Natural killer cell (primary cell): ENCODE measurements at regions of chr18 and their contacts with region 1.

Region 1: GRCh38 chr18:22933206-22933957 is at the start of gene RBBP8:
- DNase-seq: peak; percentile 85 to 89
- ATAC-seq: peak; percentile 83 to 91 (median 85)
- H3K4me3 ChIP-seq: peak within 1 kb of the TSS; percentile 99
- H3K4me3 Mint-ChIP-seq: peak within 1 kb of the TSS; percentile 96
- H3K27ac ChIP-seq: peak within 1 kb of the TSS; percentile 99
- H3K27ac Mint-ChIP-seq: peak within 1 kb of the TSS; percentile 94 to 95
- H3K4me1 ChIP-seq: peaks cover 8% of the 10 kb centered on the region
- H3K4me1 Mint-ChIP-seq: peaks cover 14 to 15% of the 10 kb centered on the region in 2 donors
- H3K27me3 ChIP-seq: no peaks in the 10 kb centered on the region
- H3K27me3 Mint-ChIP-seq: no peaks in the 10 kb centered on the region
- CTCF ChIP-seq: no peak
- total RNA-seq, gene RBBP8: 11.6 to 18.7 (median 12.1) TPM

Region 2: DNA sequence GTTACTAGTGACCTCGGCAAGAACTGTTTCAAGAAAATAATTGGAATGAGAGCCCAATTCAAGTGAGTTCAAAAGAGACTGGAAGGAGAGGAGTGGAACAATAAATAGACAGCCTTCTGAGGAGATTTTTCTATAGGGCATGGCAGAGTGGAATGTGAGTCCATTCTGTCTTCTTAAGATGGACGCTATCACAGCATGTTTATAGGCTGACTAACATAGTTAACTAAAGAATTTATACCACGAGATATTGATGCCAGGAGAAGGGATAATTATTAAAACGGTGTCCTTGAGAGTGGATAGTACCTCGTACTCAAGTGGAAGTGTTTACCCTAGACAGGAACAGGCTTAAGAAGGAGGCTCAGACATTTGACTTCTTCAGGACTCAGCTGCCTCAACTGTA is 143.8 kb before region 1 on chr18:
- intact Hi-C with region 1: no loop called
- DNase-seq: no peak
- ATAC-seq: no peak
- H3K4me3 ChIP-seq: no peak overlapping the region
- H3K4me3 Mint-ChIP-seq: no peak overlapping the region
- H3K27ac ChIP-seq: no peak overlapping the region
- H3K27ac Mint-ChIP-seq: no peak overlapping the region
- H3K4me1 ChIP-seq: no peaks in the 10 kb centered on the region
- H3K4me1 Mint-ChIP-seq: no peaks in the 10 kb centered on the region
- H3K27me3 ChIP-seq: no peaks in the 10 kb centered on the region
- H3K27me3 Mint-ChIP-seq: peaks cover 21 to 39% of the 10 kb centered on the region in 2 donors
- CTCF ChIP-seq: no peak

Region 3: GRCh38 chr18:22900558-22901238 is 32.7 kb before region 1 on chr18:
- intact Hi-C with region 1: no loop called
- DNase-seq: no peak
- ATAC-seq: no peak
- H3K4me3 ChIP-seq: no peak overlapping the region
- H3K4me3 Mint-ChIP-seq: no peak overlapping the region
- H3K27ac ChIP-seq: no peak overlapping the region
- H3K27ac Mint-ChIP-seq: no peak overlapping the region
- H3K4me1 ChIP-seq: no peaks in the 10 kb centered on the region
- H3K4me1 Mint-ChIP-seq: no peaks in the 10 kb centered on the region
- H3K27me3 ChIP-seq: no peaks in the 10 kb centered on the region
- H3K27me3 Mint-ChIP-seq: peaks cover 0 to 6% of the 10 kb centered on the region in 2 donors
- CTCF ChIP-seq: no peak

Region 4: GRCh38 chr18:22971038-22971437 is 37.7 kb after region 1 on chr18:
- intact Hi-C with region 1: no loop called
- DNase-seq: no peak
- ATAC-seq: no peak
- H3K4me3 ChIP-seq: no peak overlapping the region
- H3K4me3 Mint-ChIP-seq: no peak overlapping the region
- H3K27ac ChIP-seq: no peak overlapping the region
- H3K27ac Mint-ChIP-seq: no peak overlapping the region
- H3K4me1 ChIP-seq: no peaks in the 10 kb centered on the region
- H3K4me1 Mint-ChIP-seq: no peaks in the 10 kb centered on the region
- H3K27me3 ChIP-seq: no peaks in the 10 kb centered on the region
- H3K27me3 Mint-ChIP-seq: no peaks in the 10 kb centered on the region
- CTCF ChIP-seq: no peak

Region 5: DNA sequence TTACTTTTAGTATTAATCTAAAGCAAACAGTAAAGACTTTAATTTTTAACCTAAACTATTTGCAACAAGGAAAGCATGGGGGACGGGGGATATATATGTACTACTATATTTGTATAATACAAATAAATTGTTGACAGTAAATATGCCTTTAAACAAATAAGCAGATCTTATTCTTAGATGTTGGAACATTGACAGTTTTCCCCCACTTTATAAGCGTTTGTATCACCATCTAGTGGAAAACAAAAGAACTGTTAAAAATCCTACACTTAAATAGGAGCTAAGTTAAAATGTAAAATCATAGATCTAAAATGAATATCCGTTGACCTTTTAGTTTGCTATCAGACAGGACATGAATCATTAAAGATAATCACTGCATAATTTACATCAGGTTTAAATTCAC is 49.8 kb after region 1 on chr18:
- intact Hi-C with region 1: loop called (anchors 1 kb)
- DNase-seq: peak in 1 of 2 donors; percentile 48
- ATAC-seq: peak in 1 of 3 donors; percentile 52
- H3K4me3 ChIP-seq: no peak overlapping the region
- H3K4me3 Mint-ChIP-seq: no peak overlapping the region
- H3K27ac ChIP-seq: no peak overlapping the region
- H3K27ac Mint-ChIP-seq: no peak overlapping the region
- H3K4me1 ChIP-seq: no peaks in the 10 kb centered on the region
- H3K4me1 Mint-ChIP-seq: no peaks in the 10 kb centered on the region
- H3K27me3 ChIP-seq: no peaks in the 10 kb centered on the region
- H3K27me3 Mint-ChIP-seq: no peaks in the 10 kb centered on the region
- CTCF ChIP-seq: peak; percentile 59

Region 6: DNA sequence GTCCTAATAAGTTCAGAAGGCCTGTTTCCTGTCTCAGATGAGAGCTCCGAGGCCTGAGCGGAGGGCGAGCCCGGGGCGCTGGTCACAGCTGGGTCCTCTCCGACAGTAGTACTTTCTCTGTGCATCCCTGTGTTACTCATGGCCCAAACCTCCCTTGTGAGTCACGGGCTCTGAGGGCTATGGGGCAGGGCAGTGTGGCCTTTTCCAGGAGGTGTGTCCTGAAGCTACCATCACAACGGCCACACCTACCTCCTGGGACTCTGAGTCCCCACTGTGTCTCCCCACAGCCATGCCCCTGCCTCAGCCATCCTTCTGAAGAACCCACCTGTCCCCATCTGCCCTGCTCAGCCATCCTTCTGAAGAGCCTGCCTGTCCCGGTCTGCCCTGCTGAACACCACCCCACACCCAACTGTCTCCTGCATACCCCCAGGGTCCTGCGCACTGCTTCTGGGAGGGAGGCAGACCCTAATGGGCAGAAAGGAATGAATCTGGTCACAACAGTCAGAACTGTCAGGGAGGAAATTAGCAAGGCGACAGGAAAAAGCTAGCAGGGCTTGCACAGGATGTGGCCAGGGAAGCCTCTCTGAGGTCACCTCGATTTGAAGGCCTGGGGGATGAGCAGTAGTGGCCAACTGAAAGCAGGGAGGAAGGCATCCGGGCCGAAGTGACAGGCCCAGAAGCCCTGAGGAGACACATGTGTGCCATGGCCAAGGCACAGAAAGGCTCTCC is 374.3 kb after region 1 on chr18:
- intact Hi-C with region 1: loop called (anchors 2 kb)
- DNase-seq: peak; percentile 32 to 49
- ATAC-seq: peak; percentile 33 to 61 (median 54)
- H3K4me3 ChIP-seq: no peak overlapping the region
- H3K4me3 Mint-ChIP-seq: peak overlapping the region; percentile 88
- H3K27ac ChIP-seq: peak overlapping the region; percentile 80
- H3K27ac Mint-ChIP-seq: peak overlapping the region; percentile 86 to 97
- H3K4me1 ChIP-seq: peaks cover 40% of the 10 kb centered on the region
- H3K4me1 Mint-ChIP-seq: peaks cover 54 to 56% of the 10 kb centered on the region in 2 donors
- H3K27me3 ChIP-seq: no peaks in the 10 kb centered on the region
- H3K27me3 Mint-ChIP-seq: peaks cover 0 to 4% of the 10 kb centered on the region in 2 donors
- CTCF ChIP-seq: no peak

Region 7: DNA sequence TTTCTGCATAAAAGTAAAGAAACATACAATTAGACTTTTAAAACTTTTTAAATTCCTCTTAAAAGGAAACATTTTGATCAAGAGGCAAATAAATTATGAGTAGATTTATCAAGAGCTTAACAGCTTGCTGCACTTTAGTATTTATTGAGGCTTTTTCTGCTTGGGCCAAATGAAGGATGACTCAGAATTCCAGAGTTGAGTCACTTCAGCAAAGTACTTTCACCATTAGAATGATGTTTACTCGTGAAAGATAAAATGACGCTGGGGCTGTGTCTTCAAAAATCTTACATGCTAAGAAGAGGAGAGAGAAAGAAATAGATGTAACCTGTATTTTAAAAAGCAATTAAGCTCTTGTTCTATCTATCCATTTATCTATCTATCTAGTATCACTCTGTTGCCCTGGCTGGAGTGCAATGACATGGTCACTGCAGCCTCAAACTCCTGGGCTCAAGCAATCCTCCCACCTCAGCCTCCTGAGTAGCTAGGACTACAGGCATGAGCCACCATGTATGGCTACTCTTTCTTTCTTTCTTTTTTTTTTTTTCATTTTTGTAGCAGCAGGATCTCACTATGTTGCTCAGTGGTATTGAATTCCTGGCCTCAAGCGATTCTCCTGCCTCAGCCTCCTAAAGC is 444.4 kb after region 1 on chr18:
- intact Hi-C with region 1: loop called (anchors 5 kb)
- DNase-seq: no peak
- ATAC-seq: no peak
- H3K4me3 ChIP-seq: no peak overlapping the region
- H3K4me3 Mint-ChIP-seq: no peak overlapping the region
- H3K27ac ChIP-seq: no peak overlapping the region
- H3K27ac Mint-ChIP-seq: no peak overlapping the region
- H3K4me1 ChIP-seq: no peaks in the 10 kb centered on the region
- H3K4me1 Mint-ChIP-seq: no peaks in the 10 kb centered on the region
- H3K27me3 ChIP-seq: no peaks in the 10 kb centered on the region
- H3K27me3 Mint-ChIP-seq: no peaks in the 10 kb centered on the region
- CTCF ChIP-seq: no peak

Region 8: DNA sequence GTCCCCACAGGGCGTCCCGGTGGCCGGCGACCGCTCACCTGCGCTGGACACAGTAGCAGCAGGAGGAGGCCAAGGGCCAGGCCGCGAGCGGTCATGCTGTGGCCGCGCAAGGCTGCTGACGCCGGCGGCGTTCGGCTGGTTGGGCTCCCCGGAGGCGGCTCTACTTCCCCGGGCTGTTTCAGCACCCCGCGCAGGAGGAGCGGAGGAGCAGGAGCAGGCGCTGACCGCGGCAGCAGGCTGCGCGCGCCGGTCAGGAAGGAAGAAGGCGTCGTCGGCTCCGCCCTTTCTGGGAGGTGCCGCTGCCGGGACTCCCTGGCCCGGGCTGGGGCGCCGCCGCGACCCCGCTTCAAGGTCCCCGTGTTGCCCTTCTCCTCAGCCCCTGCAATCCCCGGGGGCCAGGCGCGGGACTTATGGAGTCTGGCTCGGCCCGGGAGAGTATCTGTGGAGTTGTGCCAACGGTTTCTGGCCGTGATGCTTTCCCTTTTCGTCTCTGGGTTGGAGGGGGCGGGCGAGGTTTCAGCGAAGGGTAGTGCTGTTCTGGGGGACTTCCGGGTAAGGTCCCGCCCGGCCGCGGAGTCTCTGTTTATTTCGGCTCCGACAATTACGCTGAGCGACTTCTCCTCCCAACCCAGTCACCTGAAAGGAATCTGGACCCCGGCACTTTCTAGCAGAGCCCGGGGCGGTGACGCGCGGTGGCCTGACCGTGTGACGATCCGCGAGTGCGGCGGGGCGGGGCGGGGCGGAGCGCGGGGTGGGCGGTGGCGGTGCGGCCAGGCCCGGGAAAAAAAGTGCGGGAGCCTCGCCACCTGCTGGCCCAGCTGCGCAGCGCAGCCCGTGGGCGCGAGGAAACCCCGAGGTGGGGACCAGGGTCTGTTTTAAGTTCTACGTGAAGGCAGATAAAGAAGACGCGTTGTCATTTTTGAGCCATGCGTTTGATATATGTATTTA is 653.1 kb after region 1 on chr18 and contains the start of gene NPC1:
- intact Hi-C with region 1: loop called (anchors 5 kb)
- DNase-seq: peak; percentile 93 to 96
- ATAC-seq: peak; percentile 86 to 95 (median 89)
- H3K4me3 ChIP-seq: peak within 1 kb of the TSS; percentile 99
- H3K4me3 Mint-ChIP-seq: peak within 1 kb of the TSS; percentile 96
- H3K27ac ChIP-seq: peak within 1 kb of the TSS; percentile 100
- H3K27ac Mint-ChIP-seq: peak within 1 kb of the TSS; percentile 81 to 94
- H3K4me1 ChIP-seq: peaks cover 37% of the 10 kb centered on the region
- H3K4me1 Mint-ChIP-seq: peaks cover 40 to 47% of the 10 kb centered on the region in 2 donors
- H3K27me3 ChIP-seq: no peaks in the 10 kb centered on the region
- H3K27me3 Mint-ChIP-seq: no peaks in the 10 kb centered on the region
- CTCF ChIP-seq: peak; percentile 96
- total RNA-seq, gene NPC1: 143 to 203 (median 173) TPM